ENCODE measurements at regions of chr2 and their contacts with region 1.

Region 1: GRCh38 chr2:72973566-72974435 is 56.5 kb downstream of the EMX1 start:
- DNase-seq: peak in 9 of 14 experiments; percentile 4 to 61 (median 17)
- ATAC-seq: peak; percentile 69
- H3K4me3 ChIP-seq: no peak overlapping the region
- H3K4me3 Mint-ChIP-seq: no peak overlapping the region
- H3K27ac ChIP-seq: no peak overlapping the region
- H3K27ac Mint-ChIP-seq: no peak overlapping the region
- H3K4me1 ChIP-seq: no peaks in the 10 kb centered on the region
- H3K4me1 Mint-ChIP-seq: no peaks in the 10 kb centered on the region
- H3K27me3 ChIP-seq: no peaks in the 10 kb centered on the region
- H3K27me3 Mint-ChIP-seq: no peaks in the 10 kb centered on the region
- CTCF ChIP-seq: peak; percentile 41

Region 2: GRCh38 chr2:72770879-72771461 is 202.8 kb before region 1 on chr2:
- CTCF ChIA-PET with region 1: no interaction called
- POLR2A ChIA-PET with region 1: no interaction called
- intact Hi-C with region 1: loop called in 1 of 2 experiments (anchors 2 kb)
- DNase-seq: peak in 12 of 14 experiments; percentile 11 to 84 (median 46)
- ATAC-seq: peak; percentile 69
- H3K4me3 ChIP-seq: no peak overlapping the region
- H3K4me3 Mint-ChIP-seq: no peak overlapping the region
- H3K27ac ChIP-seq: no peak overlapping the region
- H3K27ac Mint-ChIP-seq: no peak overlapping the region
- H3K4me1 ChIP-seq: no peaks in the 10 kb centered on the region
- H3K4me1 Mint-ChIP-seq: no peaks in the 10 kb centered on the region
- H3K27me3 ChIP-seq: no peaks in the 10 kb centered on the region
- H3K27me3 Mint-ChIP-seq: no peaks in the 10 kb centered on the region
- CTCF ChIP-seq: peak; percentile 91

Region 3: GRCh38 chr2:72892506-72893173 is 81.2 kb before region 1 on chr2:
- CTCF ChIA-PET with region 1: no interaction called
- POLR2A ChIA-PET with region 1: no interaction called
- intact Hi-C with region 1: loop called (anchors 1 to 5 kb)
- DNase-seq: peak in 11 of 14 experiments; percentile 22 to 76 (median 50)
- ATAC-seq: peak; percentile 78
- H3K4me3 ChIP-seq: no peak overlapping the region
- H3K4me3 Mint-ChIP-seq: no peak overlapping the region
- H3K27ac ChIP-seq: no peak overlapping the region
- H3K27ac Mint-ChIP-seq: no peak overlapping the region
- H3K4me1 ChIP-seq: peaks cover 8% of the 10 kb centered on the region
- H3K4me1 Mint-ChIP-seq: no peaks in the 10 kb centered on the region
- H3K27me3 ChIP-seq: peaks cover 52 to 63% of the 10 kb centered on the region in 2 experiments
- H3K27me3 Mint-ChIP-seq: peaks cover 94% of the 10 kb centered on the region
- CTCF ChIP-seq: peak; percentile 48

Region 4: DNA sequence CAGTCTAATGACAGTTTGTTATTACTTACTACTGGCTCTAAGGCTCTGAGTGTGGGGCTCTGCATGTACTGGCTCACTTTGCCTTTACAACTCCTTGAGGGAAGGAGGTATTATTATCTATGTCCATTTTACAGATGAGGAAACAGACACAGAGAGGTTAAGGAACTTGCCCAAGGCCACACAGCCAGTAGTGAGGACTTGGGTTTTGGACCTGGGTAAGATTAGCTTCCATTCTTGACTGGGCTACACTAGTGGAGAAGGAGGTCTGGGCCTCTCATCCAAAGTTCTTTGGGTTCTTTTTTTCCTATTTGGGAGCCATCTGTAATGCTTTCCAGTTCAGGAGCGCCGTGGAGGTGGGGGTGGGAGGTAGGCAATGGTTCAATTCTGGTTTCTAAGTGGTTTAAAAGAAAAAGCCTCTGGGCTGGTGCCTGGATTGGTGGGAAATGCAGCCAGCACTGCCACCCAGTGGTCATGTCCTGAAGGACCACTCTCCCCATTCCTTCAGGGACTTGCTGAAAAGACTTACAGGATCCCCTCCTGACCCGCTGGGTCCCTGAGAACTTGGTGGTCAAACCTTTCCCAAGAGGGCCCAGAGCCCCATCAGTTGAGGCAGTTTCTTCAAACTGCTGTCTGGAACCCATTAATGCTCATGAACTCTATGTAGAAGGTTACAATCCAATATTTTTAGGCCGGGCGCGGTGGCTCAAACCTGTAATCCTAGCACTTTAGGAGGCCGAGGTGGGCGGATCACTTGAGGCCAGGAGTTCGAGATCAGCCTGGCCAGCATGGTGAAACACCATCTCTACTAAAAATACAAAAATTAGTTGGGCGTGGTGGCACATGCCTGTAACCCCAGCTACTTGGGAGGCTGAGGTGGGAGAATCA is 189.9 kb after region 1 on chr2:
- CTCF ChIA-PET with region 1: no interaction called
- POLR2A ChIA-PET with region 1: no interaction called
- intact Hi-C with region 1: no loop called
- DNase-seq: peak; percentile 27 to 80 (median 58)
- ATAC-seq: peak; percentile 79
- H3K4me3 ChIP-seq: no peak overlapping the region
- H3K4me3 Mint-ChIP-seq: no peak overlapping the region
- H3K27ac ChIP-seq: no peak overlapping the region
- H3K27ac Mint-ChIP-seq: no peak overlapping the region
- H3K4me1 ChIP-seq: no peaks in the 10 kb centered on the region
- H3K4me1 Mint-ChIP-seq: no peaks in the 10 kb centered on the region
- H3K27me3 ChIP-seq: no peaks in the 10 kb centered on the region
- H3K27me3 Mint-ChIP-seq: peaks cover 16% of the 10 kb centered on the region
- CTCF ChIP-seq: peak; percentile 82

Region 5: GRCh38 chr2:73700661-73701447 is 727.1 kb after region 1 on chr2:
- CTCF ChIA-PET with region 1: no interaction called
- POLR2A ChIA-PET with region 1: no interaction called
- intact Hi-C with region 1: no loop called
- DNase-seq: no peak
- ATAC-seq: no peak
- H3K4me3 ChIP-seq: no peak overlapping the region
- H3K4me3 Mint-ChIP-seq: no peak overlapping the region
- H3K27ac ChIP-seq: no peak overlapping the region
- H3K27ac Mint-ChIP-seq: no peak overlapping the region
- H3K4me1 ChIP-seq: no peaks in the 10 kb centered on the region
- H3K4me1 Mint-ChIP-seq: no peaks in the 10 kb centered on the region
- H3K27me3 ChIP-seq: peaks cover 3 to 10% of the 10 kb centered on the region in 2 experiments
- H3K27me3 Mint-ChIP-seq: peaks cover 29% of the 10 kb centered on the region
- CTCF ChIP-seq: no peak